ENCODE measurements at regions of chr12 and their contacts with region 1.

Region 1: GRCh38 chr12:9039397-9039977 is 50.1 kb downstream of the KLRG1 start:
- DNase-seq: no peak
- H3K4me3 Mint-ChIP-seq: no peak overlapping the region
- H3K27ac Mint-ChIP-seq: no peak overlapping the region
- H3K4me1 Mint-ChIP-seq: peaks cover 42% of the 10 kb centered on the region
- H3K27me3 Mint-ChIP-seq: no peaks in the 10 kb centered on the region

Region 2: DNA sequence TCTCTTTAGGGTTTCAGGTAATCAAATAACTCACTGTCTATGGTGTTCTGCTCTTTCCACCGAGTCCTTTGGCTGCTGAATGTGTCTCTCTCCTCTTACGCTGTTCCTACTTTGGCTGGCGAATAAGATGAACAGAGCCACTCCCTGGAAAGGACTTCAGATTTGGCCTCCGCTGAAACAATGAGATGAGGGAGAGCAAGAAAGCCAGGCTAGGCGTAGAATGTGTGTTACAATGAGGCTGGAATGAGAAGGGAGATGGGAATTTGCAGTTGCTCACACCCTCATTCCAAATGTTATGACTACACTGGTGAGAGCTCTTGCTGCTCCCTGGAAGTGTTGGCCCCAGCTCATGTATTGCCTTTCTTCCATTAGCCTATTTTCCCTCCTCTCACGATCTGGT is 376.9 kb before region 1 on chr12 and contains the start of gene MFAP5:
- CTCF ChIA-PET with region 1: interaction called, 3 read pairs
- intact Hi-C with region 1: loop called (anchors 2 kb)
- DNase-seq: no peak
- H3K4me3 Mint-ChIP-seq: no peak within 1 kb of the TSS
- H3K27ac Mint-ChIP-seq: no peak within 1 kb of the TSS
- H3K4me1 Mint-ChIP-seq: no peaks in the 10 kb centered on the region
- H3K27me3 Mint-ChIP-seq: peaks cover 5% of the 10 kb centered on the region
- total RNA-seq, gene MFAP5: not detected

Region 3: GRCh38 chr12:8687846-8688601 is 351.5 kb before region 1 on chr12:
- CTCF ChIA-PET with region 1: interaction called, 3 read pairs
- intact Hi-C with region 1: loop called (anchors 2 kb)
- DNase-seq: no peak
- H3K4me3 Mint-ChIP-seq: no peak overlapping the region
- H3K27ac Mint-ChIP-seq: no peak overlapping the region
- H3K4me1 Mint-ChIP-seq: peaks cover 6% of the 10 kb centered on the region
- H3K27me3 Mint-ChIP-seq: no peaks in the 10 kb centered on the region

Region 4: GRCh38 chr12:8914716-8915526 is 124.6 kb before region 1 on chr12:
- CTCF ChIA-PET with region 1: interaction called, 3 read pairs
- intact Hi-C with region 1: loop called (anchors 2 kb)
- DNase-seq: peak; percentile 61
- H3K4me3 Mint-ChIP-seq: no peak overlapping the region
- H3K27ac Mint-ChIP-seq: no peak overlapping the region
- H3K4me1 Mint-ChIP-seq: peaks cover 15% of the 10 kb centered on the region
- H3K27me3 Mint-ChIP-seq: no peaks in the 10 kb centered on the region

Region 5: DNA sequence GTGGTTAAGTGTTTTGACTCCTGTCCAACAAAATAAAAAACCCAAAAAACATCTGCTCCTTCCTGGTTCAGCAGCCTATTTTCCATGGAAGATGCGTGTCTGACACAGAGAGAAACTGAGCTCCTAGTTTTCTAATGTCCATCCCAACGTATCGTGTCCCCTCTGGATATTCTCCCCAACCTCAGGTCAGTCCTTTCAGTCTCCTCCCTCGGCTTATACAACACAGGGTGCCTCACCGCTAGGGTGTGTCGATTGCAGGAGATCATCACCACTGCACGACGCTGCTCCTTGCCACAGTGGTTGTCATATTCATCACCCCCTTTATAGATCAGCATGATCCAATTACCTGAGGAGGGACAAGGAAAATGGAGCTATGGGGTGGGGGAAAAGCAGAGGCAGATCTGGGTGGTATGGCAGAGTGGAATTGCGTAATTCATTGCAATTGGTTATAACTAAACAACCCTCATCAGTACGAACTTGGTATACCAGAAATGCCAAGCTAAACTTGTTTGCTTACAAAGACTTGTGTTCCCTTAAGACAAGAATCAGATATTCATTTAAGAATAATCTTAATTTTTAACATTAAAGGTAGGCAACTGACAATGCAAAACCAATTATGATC is 95.8 kb before region 1 on chr12:
- CTCF ChIA-PET with region 1: interaction called, 191 read pairs
- intact Hi-C with region 1: no loop called
- DNase-seq: no peak
- H3K4me3 Mint-ChIP-seq: no peak overlapping the region
- H3K27ac Mint-ChIP-seq: no peak overlapping the region
- H3K4me1 Mint-ChIP-seq: peaks cover 23% of the 10 kb centered on the region
- H3K27me3 Mint-ChIP-seq: no peaks in the 10 kb centered on the region

Region 6: DNA sequence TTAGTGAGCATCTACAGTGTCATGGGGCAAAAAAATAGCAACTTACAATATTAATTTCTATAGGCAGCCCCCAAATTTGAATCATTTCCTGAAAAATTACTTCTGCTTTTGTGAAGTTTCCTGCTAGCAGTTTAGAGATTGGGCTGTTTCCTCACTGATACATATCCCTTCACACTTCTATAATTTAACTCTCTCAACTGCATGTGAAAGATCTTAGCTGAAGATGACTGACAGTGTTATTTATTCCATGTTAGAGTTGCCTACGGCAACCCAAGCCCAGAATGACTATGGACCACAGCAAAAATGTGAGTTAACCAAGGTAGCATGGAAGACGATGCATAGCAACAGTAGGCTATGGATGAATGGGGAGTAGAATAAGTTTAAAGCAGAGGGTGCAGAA is 50.1 kb before region 1 on chr12 and contains the start of gene KLRG1:
- CTCF ChIA-PET with region 1: interaction called, 10 read pairs
- intact Hi-C with region 1: no loop called
- DNase-seq: peak; percentile 55
- H3K4me3 Mint-ChIP-seq: peak within 1 kb of the TSS; percentile 53
- H3K27ac Mint-ChIP-seq: peak within 1 kb of the TSS; percentile 43
- H3K4me1 Mint-ChIP-seq: peaks cover 61% of the 10 kb centered on the region
- H3K27me3 Mint-ChIP-seq: no peaks in the 10 kb centered on the region
- total RNA-seq, gene KLRG1: 3.9 to 5.2 TPM

Region 7: DNA sequence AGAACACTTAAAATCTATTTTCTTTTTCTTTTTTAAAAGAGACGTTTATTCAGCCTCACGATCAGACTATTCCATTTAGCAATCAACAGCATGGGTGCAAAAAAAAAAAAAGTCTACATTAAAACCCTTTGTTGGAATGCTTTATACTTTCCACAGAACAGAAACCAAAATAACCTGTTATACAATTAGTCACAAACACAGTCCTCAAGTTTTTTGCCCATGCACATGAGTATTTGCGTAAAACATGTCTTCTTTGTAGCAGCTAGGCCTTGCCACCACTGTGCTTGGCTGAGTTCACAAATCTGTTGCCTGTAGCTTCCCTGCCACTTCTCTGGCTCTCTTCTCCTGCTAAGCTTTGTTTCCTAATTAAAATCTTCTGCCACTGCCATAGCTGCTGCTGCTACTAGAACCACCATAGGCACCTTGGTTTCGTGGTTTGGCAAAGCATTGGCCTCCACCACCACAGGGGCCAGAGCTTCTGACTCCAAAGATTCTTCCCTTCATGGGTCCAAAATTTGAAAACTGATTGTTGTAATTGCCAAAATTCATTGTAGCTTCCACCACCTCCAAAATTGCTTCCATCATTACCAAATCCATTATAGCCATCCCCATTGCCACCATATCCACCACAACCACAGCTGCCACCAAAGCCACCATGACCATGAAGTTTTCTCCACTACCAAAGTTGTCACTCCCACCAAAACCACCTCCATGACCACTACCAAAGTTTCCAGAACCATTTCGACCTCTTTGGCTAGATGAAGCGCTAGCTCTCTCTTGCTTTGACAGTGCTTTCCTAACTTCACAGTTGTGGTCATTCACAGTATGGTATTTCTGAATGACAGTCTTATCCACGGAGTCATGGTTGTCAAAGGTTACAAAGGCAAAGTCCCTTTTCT is 12.1 kb before region 1 on chr12:
- CTCF ChIA-PET with region 1: interaction called, 40 read pairs
- intact Hi-C with region 1: no loop called
- DNase-seq: peak; percentile 28
- H3K4me3 Mint-ChIP-seq: peak overlapping the region; percentile 6
- H3K27ac Mint-ChIP-seq: peak overlapping the region; percentile 69
- H3K4me1 Mint-ChIP-seq: peaks cover 50% of the 10 kb centered on the region
- H3K27me3 Mint-ChIP-seq: no peaks in the 10 kb centered on the region

Region 8: DNA sequence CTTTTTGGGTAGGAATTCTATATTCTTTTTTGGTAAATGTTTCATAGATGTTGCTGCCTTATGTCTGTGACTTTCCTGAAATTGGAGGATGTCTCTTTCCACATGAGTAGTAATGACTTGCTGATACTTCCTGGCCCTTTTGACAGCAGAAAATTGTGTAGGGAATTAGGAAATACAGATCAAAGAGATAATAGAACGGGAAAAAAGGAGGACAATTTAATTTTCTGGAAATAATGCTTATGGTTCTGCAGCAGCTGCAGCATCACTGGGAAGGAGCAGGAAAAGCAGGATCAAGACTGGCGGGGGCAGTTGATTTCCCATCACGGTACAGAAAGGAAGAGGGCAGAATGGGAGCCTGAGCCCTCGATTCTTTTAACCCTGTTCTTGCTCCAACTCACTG is 237.5 kb after region 1 on chr12:
- CTCF ChIA-PET with region 1: no interaction called
- intact Hi-C with region 1: no loop called
- DNase-seq: no peak
- H3K4me3 Mint-ChIP-seq: no peak overlapping the region
- H3K27ac Mint-ChIP-seq: no peak overlapping the region
- H3K4me1 Mint-ChIP-seq: no peaks in the 10 kb centered on the region
- H3K27me3 Mint-ChIP-seq: no peaks in the 10 kb centered on the region

Measured in activated naive CD4-positive, alpha-beta T cell treated with anti-CD3 and anti-CD28 coated beads for 36 hours (primary cell).